ENCODE measurements at regions of chr1 and their contacts with region 1.

Region 1: GRCh38 chr1:37901191-37901892 is 42.0 kb upstream of the MTF1 start:
- DNase-seq: peak; percentile 61
- ATAC-seq: peak; percentile 91
- H3K4me3 ChIP-seq: no peak overlapping the region
- H3K27ac ChIP-seq: peak overlapping the region; percentile 87
- H3K4me1 ChIP-seq: peaks cover 15% of the 10 kb centered on the region
- H3K27me3 ChIP-seq: no peaks in the 10 kb centered on the region
- CTCF ChIP-seq: no peak
- EP300 ChIP-seq: 0 out of 4 replicates have a peak, but pooled peaks have one; percentile 46 to 47
- POLR2A ChIP-seq: no peak
- RAD21 ChIP-seq: no peak

Region 2: DNA sequence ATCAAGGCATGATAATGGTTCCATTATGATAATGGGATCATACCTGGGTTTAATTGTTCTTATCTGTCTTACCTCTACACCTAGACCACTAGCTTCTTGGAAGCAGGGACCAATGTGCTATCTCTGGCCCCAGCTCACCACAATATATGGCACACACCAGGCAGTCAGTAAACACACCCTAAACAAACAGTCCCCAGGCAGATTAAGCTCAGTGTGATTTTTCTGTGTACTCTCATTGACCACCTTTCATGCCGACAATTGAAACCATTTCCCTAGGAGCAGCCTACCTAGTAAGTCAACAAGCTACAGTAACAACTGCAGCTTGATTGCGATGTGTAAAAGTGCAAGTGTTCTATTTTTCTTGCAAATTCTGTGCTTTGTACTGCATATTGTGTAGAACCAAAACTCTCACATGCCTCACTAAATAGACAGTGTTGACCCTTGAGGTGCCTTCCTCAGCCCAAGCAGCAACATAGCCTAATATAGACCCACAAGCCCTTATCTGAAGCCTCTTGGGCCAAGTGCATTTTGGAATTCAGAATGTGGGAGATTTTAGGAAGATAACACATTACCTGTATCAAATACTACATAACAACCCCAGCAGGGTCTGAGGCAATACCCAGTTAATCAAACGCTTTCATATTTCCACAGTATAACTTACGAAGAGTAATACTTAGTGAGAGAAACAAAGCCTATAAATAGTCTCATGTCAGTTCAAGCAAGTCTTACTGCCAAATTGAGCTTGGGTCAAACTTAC is 13.6 kb after region 1 on chr1:
- CTCF ChIA-PET with region 1: interaction called, 6 read pairs
- POLR2A ChIA-PET with region 1: interaction called, 3 read pairs
- RAD21 ChIA-PET with region 1: no interaction called
- SMC1A ChIA-PET with region 1: interaction called, 12 read pairs
- in situ Hi-C with region 1: no loop called
- intact Hi-C with region 1: no loop called
- DNase-seq: no peak
- ATAC-seq: no peak
- H3K4me3 ChIP-seq: no peak overlapping the region
- H3K27ac ChIP-seq: no peak overlapping the region
- H3K4me1 ChIP-seq: peaks cover 2% of the 10 kb centered on the region; the same call in 1 of the 2 replicates
- H3K27me3 ChIP-seq: no peaks in the 10 kb centered on the region
- CTCF ChIP-seq: no peak
- EP300 ChIP-seq: no peak
- POLR2A ChIP-seq: no peak
- RAD21 ChIP-seq: no peak

Region 3: GRCh38 chr1:37922767-37923550 is 21.6 kb after region 1 on chr1:
- CTCF ChIA-PET with region 1: interaction called, 19 read pairs
- POLR2A ChIA-PET with region 1: interaction called, 26 read pairs
- RAD21 ChIA-PET with region 1: interaction called, 30 read pairs
- SMC1A ChIA-PET with region 1: interaction called, 25 read pairs
- in situ Hi-C with region 1: no loop called
- intact Hi-C with region 1: loop called (anchors 2 kb)
- DNase-seq: peak; percentile 89
- ATAC-seq: peak; percentile 80
- H3K4me3 ChIP-seq: peak overlapping the region; percentile 39; the same call in 1 of the 2 replicates
- H3K27ac ChIP-seq: peak overlapping the region; percentile 79
- H3K4me1 ChIP-seq: peaks cover 45% of the 10 kb centered on the region
- H3K27me3 ChIP-seq: no peaks in the 10 kb centered on the region
- CTCF ChIP-seq: 0 out of 6 replicates have a peak, but pooled peaks of 1 of the 3 experiments have one; percentile 2
- EP300 ChIP-seq: peak; percentile 38 to 53; a peak in 3 of 4 replicates
- POLR2A ChIP-seq: no peak
- RAD21 ChIP-seq: no peak

Region 4: DNA sequence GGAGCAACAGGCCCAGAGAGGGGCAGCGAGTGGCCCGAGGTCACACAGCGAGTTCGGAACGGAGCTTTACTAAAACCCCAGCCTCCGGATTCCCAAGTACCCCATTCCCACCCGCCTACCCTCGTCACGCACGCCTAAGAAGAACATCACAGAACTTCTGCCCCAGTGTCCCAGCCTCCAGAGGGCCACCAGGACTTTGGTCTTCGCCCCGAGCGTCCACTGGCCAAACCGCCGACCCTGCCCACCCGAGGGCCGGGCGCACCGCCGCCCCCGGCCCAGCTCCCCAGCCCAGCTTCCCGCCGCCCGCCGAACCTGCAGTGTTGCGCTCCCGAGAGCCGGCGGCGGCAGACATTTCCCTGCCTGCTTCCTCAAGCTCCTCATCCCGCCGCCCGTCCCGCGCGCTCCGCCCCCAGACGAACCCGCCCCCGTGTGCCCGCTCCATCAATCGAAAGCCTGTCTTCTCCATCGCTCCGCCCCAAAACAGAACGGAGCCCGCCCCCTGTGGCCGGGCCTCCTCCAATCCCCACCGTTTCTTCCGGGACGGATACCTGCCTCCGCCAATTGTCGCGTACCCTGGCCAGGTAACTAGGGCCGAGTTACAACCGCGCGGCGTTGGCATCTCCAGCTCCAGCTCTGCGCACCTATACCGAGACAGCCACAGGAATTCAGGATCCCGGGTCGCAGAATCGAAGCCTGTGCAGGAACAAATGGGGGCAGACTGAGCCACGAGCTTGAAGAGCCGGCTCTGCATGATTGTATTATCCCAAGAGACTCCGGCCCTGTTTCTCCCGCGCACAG is 30.2 kb after region 1 on chr1:
- CTCF ChIA-PET with region 1: interaction called, 7 read pairs
- POLR2A ChIA-PET with region 1: interaction called, 23 read pairs
- RAD21 ChIA-PET with region 1: interaction called, 30 read pairs
- SMC1A ChIA-PET with region 1: interaction called, 25 read pairs
- in situ Hi-C with region 1: no loop called
- intact Hi-C with region 1: no loop called
- DNase-seq: peak; percentile 86
- ATAC-seq: peak; percentile 97
- H3K4me3 ChIP-seq: peak overlapping the region; percentile 97
- H3K27ac ChIP-seq: peak overlapping the region; percentile 67
- H3K4me1 ChIP-seq: peaks cover 9% of the 10 kb centered on the region
- H3K27me3 ChIP-seq: no peaks in the 10 kb centered on the region
- CTCF ChIP-seq: no peak
- EP300 ChIP-seq: no peak
- POLR2A ChIP-seq: peak; percentile 79
- RAD21 ChIP-seq: no peak

Region 5: GRCh38 chr1:37946703-37947360 is 45.5 kb after region 1 on chr1 and contains the start of gene INPP5B:
- CTCF ChIA-PET with region 1: no interaction called
- POLR2A ChIA-PET with region 1: interaction called, 3 read pairs
- RAD21 ChIA-PET with region 1: interaction called, 13 read pairs
- SMC1A ChIA-PET with region 1: interaction called, 10 read pairs
- in situ Hi-C with region 1: no loop called
- intact Hi-C with region 1: no loop called
- DNase-seq: peak; percentile 60
- ATAC-seq: peak; percentile 99
- H3K4me3 ChIP-seq: peak within 1 kb of the TSS; percentile 89
- H3K27ac ChIP-seq: peak within 1 kb of the TSS; percentile 63
- H3K4me1 ChIP-seq: peaks cover 34% of the 10 kb centered on the region
- H3K27me3 ChIP-seq: no peaks in the 10 kb centered on the region
- CTCF ChIP-seq: no peak
- EP300 ChIP-seq: no peak
- POLR2A ChIP-seq: peak; percentile 72
- RAD21 ChIP-seq: no peak
- polyA plus RNA-seq, gene INPP5B: 10.9 to 14.6 TPM

Measured in GM12878 (cell line).